Dendritic cell treated with granulocyte-macrophage colony-stimulating factor and Interleukin-4, amounts not matched to agents 40 ng/mL and 50 ng/mL, for 4 days (primary cell): ENCODE measurements at regions of chr4 and their contacts with region 1.

Region 1: GRCh38 chr4:184474263-184475095 is at the start of gene IRF2:
- H3K4me3 Mint-ChIP-seq: peak within 1 kb of the TSS; percentile 96
- H3K27ac Mint-ChIP-seq: peak within 1 kb of the TSS; percentile 98
- H3K4me1 Mint-ChIP-seq: peaks cover 51% of the 10 kb centered on the region
- H3K27me3 Mint-ChIP-seq: no peaks in the 10 kb centered on the region

Region 2: DNA sequence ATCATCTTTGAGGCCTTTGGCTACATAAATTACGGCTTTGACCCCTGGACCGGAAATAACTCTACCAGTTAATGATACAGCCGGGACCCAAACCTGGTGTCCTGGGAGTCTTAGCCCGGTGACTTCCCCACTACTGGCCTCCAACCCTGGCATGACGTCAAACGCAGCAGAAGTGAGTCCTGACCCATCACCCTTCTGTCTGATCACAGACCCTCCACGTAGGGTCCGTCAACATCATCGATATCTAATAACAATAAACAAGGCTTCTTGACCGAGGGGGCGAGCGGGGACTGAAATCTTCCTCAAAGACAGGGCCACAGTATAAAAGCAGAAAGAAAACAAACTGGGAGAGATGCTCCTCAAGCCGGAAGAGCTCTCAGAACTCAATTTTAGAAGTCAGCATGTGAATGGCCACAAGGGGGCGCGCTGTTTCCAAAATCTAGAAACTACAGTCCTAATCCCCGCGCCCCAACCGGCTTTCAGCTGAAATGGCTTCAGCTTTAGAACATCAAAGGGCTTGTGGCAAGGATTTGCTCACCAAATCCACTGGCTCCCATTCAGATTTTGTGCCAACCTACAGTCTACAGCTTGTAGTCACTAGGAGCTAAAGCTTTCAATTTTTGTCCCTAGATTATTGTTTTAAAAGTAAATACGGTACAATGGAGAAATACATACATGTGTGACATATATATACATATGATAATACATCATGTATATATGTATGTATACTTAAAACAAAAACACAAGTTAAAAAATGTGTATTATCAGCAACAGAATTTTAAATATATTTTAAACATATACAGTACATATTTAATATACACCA is 210.4 kb before region 1 on chr4:
- intact Hi-C with region 1: loop called (anchors 1 kb)
- H3K4me3 Mint-ChIP-seq: no peak overlapping the region
- H3K27ac Mint-ChIP-seq: no peak overlapping the region
- H3K4me1 Mint-ChIP-seq: peaks cover 42% of the 10 kb centered on the region
- H3K27me3 Mint-ChIP-seq: no peaks in the 10 kb centered on the region

Region 3: GRCh38 chr4:184392748-184393334 is 81.6 kb before region 1 on chr4:
- intact Hi-C with region 1: loop called (anchors 5 kb)
- H3K4me3 Mint-ChIP-seq: peak overlapping the region; percentile 69
- H3K27ac Mint-ChIP-seq: peak overlapping the region; percentile 96
- H3K4me1 Mint-ChIP-seq: peaks cover 74% of the 10 kb centered on the region
- H3K27me3 Mint-ChIP-seq: no peaks in the 10 kb centered on the region

Region 4: GRCh38 chr4:184514121-184514988 is 39.9 kb after region 1 on chr4:
- intact Hi-C with region 1: loop called (anchors 2 kb)
- H3K4me3 Mint-ChIP-seq: peak overlapping the region; percentile 20
- H3K27ac Mint-ChIP-seq: peak overlapping the region; percentile 83
- H3K4me1 Mint-ChIP-seq: peaks cover 47% of the 10 kb centered on the region
- H3K27me3 Mint-ChIP-seq: no peaks in the 10 kb centered on the region

Region 5: GRCh38 chr4:184649026-184649970 is 174.8 kb after region 1 on chr4 and contains the starts of genes CASP3 and PRIMPOL:
- intact Hi-C with region 1: loop called (anchors 1 kb)
- H3K4me3 Mint-ChIP-seq: peak within 1 kb of the TSS; percentile 87
- H3K27ac Mint-ChIP-seq: peak within 1 kb of the TSS; percentile 90
- H3K4me1 Mint-ChIP-seq: peaks cover 40% of the 10 kb centered on the region
- H3K27me3 Mint-ChIP-seq: no peaks in the 10 kb centered on the region